Activated CD4-positive, alpha-beta memory T cell treated with anti-CD3 and anti-CD28 coated beads for 36 hours (primary cell): ENCODE measurements at regions of chrX and their contacts with region 1.

Region 1: GRCh38 chrX:78517124-78517523 is 142.0 kb downstream of the RTL3 start:
- DNase-seq: peak; percentile 77
- H3K4me3 Mint-ChIP-seq: no peak overlapping the region
- H3K27ac Mint-ChIP-seq: peak overlapping the region; percentile 84
- H3K4me1 Mint-ChIP-seq: peaks cover 45% of the 10 kb centered on the region
- H3K27me3 Mint-ChIP-seq: no peaks in the 10 kb centered on the region

Region 2: DNA sequence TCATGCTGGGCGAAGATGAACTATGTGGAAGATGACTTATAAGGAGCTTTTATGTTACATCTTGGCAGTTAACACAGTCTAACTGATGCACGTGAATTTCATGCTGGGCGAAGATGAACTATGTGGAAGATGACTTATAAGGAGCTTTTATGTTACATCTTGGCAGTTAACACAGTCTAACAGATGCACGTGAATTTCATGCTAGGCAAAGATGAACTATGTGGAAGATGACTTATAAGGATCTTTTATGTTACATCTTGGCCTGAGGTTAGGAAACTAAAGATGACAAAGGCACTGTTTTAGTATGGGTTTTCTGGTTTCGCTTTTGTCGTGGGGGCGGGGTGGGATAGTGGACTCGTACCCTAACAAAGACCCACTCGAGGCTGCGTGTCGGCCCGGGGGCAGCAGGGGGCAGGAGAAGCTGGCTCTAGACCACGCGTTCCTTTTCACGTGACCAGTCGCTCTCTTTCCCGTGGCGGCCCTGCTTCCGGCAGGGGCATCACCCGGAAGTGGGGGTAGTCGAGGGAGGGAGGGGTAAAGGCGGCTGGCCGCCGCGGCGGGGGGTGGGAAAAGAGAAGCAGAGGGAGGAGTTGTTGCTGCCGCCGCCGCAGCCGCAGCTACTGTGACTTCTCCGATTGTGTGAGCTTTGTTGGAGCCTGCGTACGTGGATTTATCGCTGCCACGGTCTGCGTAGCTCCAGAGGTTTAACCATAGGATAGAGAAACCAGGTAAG is 606.9 kb before region 1 on chrX and contains the start of gene ATP7A:
- CTCF ChIA-PET with region 1: no interaction called
- POLR2A ChIA-PET with region 1: no interaction called
- intact Hi-C with region 1: loop called (anchors 5 kb)
- DNase-seq: peak; percentile 95
- H3K4me3 Mint-ChIP-seq: peak within 1 kb of the TSS; percentile 99
- H3K27ac Mint-ChIP-seq: peak within 1 kb of the TSS; percentile 99
- H3K4me1 Mint-ChIP-seq: peaks cover 19% of the 10 kb centered on the region
- H3K27me3 Mint-ChIP-seq: no peaks in the 10 kb centered on the region
- total RNA-seq, gene ATP7A: 8.0 TPM

Region 3: GRCh38 chrX:78314571-78314970 is 202.6 kb before region 1 on chrX:
- CTCF ChIA-PET with region 1: no interaction called
- POLR2A ChIA-PET with region 1: no interaction called
- intact Hi-C with region 1: loop called (anchors 5 kb)
- DNase-seq: peak; percentile 47
- H3K4me3 Mint-ChIP-seq: no peak overlapping the region
- H3K27ac Mint-ChIP-seq: no peak overlapping the region
- H3K4me1 Mint-ChIP-seq: peaks cover 53% of the 10 kb centered on the region
- H3K27me3 Mint-ChIP-seq: no peaks in the 10 kb centered on the region

Region 4: GRCh38 chrX:78375894-78376293 is 141.2 kb before region 1 on chrX:
- CTCF ChIA-PET with region 1: no interaction called
- POLR2A ChIA-PET with region 1: no interaction called
- intact Hi-C with region 1: loop called (anchors 1 kb)
- DNase-seq: no peak
- H3K4me3 Mint-ChIP-seq: no peak overlapping the region
- H3K27ac Mint-ChIP-seq: peak overlapping the region; percentile 23
- H3K4me1 Mint-ChIP-seq: peaks cover 21% of the 10 kb centered on the region
- H3K27me3 Mint-ChIP-seq: no peaks in the 10 kb centered on the region

Region 5: DNA sequence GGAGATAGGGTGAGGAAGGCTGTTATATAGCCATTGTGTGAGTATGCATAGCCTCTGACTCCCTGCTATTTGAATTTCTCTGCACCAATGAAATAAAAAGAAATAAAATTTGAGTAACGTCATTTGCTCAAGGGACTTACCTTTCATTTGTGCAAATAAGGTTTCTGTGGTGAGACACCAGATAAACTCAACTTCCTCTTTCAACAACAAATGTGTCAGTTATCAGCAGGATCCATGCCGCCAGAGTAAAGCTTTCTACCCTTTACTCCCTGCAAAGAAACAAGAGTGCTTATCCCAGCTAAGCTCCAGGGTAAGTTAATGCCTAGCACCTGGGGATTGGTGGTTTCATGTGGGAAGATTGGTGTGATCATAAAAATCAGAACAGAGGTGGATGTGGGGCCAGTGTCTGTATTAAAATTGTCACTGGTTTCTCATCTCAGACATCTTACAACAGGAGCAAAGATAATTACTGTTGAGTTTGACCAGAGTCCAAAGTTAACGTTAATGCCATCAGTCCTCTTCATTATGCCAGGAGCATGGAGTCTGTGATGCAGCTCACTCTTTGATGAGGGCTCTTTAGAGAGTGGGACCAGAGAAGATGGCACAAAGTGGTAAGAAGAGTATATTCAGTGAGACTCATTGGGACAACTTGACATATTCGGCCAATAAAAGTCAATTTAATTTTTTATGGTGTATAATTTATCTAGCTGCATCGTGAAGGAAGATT is 428.2 kb after region 1 on chrX and contains the start of gene P2RY10:
- CTCF ChIA-PET with region 1: no interaction called
- POLR2A ChIA-PET with region 1: no interaction called
- intact Hi-C with region 1: loop called (anchors 2 kb)
- DNase-seq: peak; percentile 38
- H3K4me3 Mint-ChIP-seq: peak within 1 kb of the TSS; percentile 85
- H3K27ac Mint-ChIP-seq: peak within 1 kb of the TSS; percentile 90
- H3K4me1 Mint-ChIP-seq: peaks cover 44% of the 10 kb centered on the region
- H3K27me3 Mint-ChIP-seq: no peaks in the 10 kb centered on the region
- total RNA-seq, gene P2RY10: 38.8 to 39.3 TPM

Region 6: GRCh38 chrX:79182616-79183015 is 665.5 kb after region 1 on chrX:
- CTCF ChIA-PET with region 1: no interaction called
- POLR2A ChIA-PET with region 1: no interaction called
- intact Hi-C with region 1: loop called (anchors 5 kb)
- DNase-seq: peak; percentile 19
- H3K4me3 Mint-ChIP-seq: peak overlapping the region; percentile 61
- H3K27ac Mint-ChIP-seq: peak overlapping the region; percentile 91
- H3K4me1 Mint-ChIP-seq: peaks cover 66% of the 10 kb centered on the region
- H3K27me3 Mint-ChIP-seq: no peaks in the 10 kb centered on the region

Region 7: DNA sequence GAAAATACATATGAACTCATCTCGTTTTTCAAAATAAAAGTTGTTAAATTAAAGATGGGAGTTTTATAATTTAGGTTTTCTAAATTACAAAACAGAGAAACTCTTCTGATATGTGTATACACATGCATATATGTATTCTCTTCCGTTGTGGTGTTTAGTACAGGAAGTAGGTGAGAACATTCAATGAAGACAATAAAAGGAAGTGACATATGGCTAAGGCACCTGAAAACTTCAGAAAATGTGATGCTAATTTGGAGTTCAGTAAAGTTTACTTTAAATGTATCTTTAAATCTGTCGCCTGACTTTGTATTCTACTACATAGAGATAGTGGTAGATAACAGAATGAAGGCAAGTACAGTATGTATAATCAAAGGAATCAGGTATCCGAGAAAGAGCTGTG is 883.5 kb after region 1 on chrX:
- CTCF ChIA-PET with region 1: no interaction called
- POLR2A ChIA-PET with region 1: no interaction called
- intact Hi-C with region 1: no loop called
- DNase-seq: no peak
- H3K4me3 Mint-ChIP-seq: no peak overlapping the region
- H3K27ac Mint-ChIP-seq: no peak overlapping the region
- H3K4me1 Mint-ChIP-seq: peaks cover 3% of the 10 kb centered on the region
- H3K27me3 Mint-ChIP-seq: no peaks in the 10 kb centered on the region